B cell (primary cell): ENCODE measurements at regions of chr5 and their contacts with region 1.

Region 1: GRCh38 chr5:132456296-132457001 is 34.1 kb downstream of the IRF1 start:
- DNase-seq: peak; percentile 84
- ATAC-seq: peak; percentile 78
- H3K4me3 ChIP-seq: peak overlapping the region; percentile 12 to 53 (median 30)
- H3K4me3 Mint-ChIP-seq: peak overlapping the region; percentile 74
- H3K27ac ChIP-seq: peak overlapping the region; percentile 88 to 93
- H3K27ac Mint-ChIP-seq: peak overlapping the region; percentile 99
- H3K4me1 ChIP-seq: peaks cover 79 to 84% of the 10 kb centered on the region in 2 donors
- H3K4me1 Mint-ChIP-seq: peaks cover 92% of the 10 kb centered on the region
- H3K27me3 ChIP-seq: no peaks in the 10 kb centered on the region
- H3K27me3 Mint-ChIP-seq: no peaks in the 10 kb centered on the region
- CTCF ChIP-seq: no peak

Region 2: DNA sequence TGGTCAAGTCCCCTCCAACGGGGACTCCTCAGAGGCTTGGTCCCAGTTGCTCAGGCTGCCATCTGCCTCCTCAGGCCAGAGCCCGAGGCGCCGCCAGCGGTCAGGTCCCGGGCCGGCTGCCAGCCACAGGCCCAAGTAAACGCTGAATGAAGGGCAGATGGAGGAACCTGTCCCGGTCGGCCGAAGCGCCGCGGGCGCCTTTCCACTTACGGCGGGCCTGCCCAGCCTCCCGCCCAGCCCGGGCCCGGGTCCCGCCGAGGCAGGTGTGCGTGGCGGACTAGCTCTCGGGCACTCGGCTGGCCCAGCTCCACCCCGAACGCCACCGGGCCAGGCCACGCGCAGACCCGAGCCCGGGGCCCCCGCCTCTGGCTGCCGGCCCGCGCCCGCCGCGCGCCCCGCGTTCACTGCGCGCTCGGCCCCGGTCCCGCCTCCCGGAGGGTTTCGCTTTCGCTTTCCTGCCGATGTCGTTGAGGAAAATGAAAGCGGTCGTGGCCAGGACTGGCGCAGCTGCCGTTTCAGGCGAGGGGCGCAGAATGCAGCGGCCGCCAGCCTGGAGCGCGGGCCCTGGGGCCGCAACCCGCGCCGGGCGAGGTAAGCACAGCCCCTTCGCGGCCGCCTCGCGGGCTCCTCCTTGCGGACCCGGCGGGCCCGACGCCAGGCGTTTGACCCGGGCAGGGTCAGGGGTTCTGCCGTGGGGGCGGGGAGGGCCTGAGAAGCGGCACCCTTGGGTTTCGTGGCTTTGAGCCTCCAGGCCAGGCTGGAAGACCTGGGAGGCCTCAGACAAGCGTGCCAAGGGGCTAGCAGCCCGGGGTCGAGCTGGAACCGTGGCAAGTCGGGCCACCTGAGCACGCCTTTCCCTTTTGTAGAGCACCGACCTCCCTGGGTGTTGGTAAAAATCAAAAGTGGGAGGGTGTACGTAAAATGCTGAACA is 45.7 kb before region 1 on chr5:
- CTCF ChIA-PET with region 1: interaction called, 26 read pairs
- POLR2A ChIA-PET with region 1: interaction called, 14 read pairs
- intact Hi-C with region 1: no loop called
- DNase-seq: peak; percentile 94
- ATAC-seq: peak; percentile 81
- H3K4me3 ChIP-seq: peak overlapping the region; percentile 71 to 93 (median 78)
- H3K4me3 Mint-ChIP-seq: peak overlapping the region; percentile 98
- H3K27ac ChIP-seq: peak overlapping the region; percentile 96 to 97
- H3K27ac Mint-ChIP-seq: peak overlapping the region; percentile 99
- H3K4me1 ChIP-seq: peaks cover 61 to 63% of the 10 kb centered on the region in 2 donors
- H3K4me1 Mint-ChIP-seq: peaks cover 68% of the 10 kb centered on the region
- H3K27me3 ChIP-seq: no peaks in the 10 kb centered on the region
- H3K27me3 Mint-ChIP-seq: no peaks in the 10 kb centered on the region
- CTCF ChIP-seq: peak; percentile 77

Region 3: DNA sequence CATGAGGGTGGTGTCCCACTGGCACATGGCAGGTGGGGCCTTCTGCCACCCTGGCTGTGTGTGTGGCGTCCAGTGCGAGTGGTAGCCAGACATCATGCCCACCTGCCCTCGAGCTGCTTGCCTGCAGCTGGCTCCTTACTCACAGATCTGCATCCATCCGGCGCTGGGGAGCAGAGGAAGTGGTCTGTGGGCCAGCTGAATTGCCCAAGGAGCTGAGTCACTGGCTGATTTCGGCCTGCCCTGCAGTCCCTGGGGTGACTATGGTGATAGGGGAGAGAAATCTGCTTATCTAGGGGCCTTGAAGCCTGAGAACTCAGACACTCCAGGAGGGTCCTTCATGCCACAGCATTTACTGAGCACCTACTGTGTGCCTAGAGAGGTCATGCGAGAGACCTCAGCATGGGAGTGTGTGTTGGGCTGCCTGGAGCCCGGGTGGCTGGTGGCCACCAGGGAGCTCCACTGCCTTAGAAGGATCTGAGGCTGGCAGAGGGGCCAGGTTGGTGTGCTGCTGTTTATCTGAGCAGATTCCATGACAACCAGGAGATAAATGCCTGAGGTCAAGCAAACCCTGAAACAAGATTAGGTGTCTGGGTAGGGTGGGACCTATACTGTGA is 29.8 kb before region 1 on chr5:
- CTCF ChIA-PET with region 1: interaction called, 127 read pairs
- POLR2A ChIA-PET with region 1: interaction called, 77 read pairs
- intact Hi-C with region 1: loop called (anchors 1 kb)
- DNase-seq: peak; percentile 64
- ATAC-seq: peak; percentile 41
- H3K4me3 ChIP-seq: peak overlapping the region in 2 of 5 experiments; percentile 8 to 56
- H3K4me3 Mint-ChIP-seq: peak overlapping the region; percentile 80
- H3K27ac ChIP-seq: peak overlapping the region; percentile 90 to 94
- H3K27ac Mint-ChIP-seq: peak overlapping the region; percentile 93
- H3K4me1 ChIP-seq: peaks cover 99 to 100% of the 10 kb centered on the region in 2 donors
- H3K4me1 Mint-ChIP-seq: peaks cover 97% of the 10 kb centered on the region
- H3K27me3 ChIP-seq: no peaks in the 10 kb centered on the region
- H3K27me3 Mint-ChIP-seq: no peaks in the 10 kb centered on the region
- CTCF ChIP-seq: no peak

Region 4: DNA sequence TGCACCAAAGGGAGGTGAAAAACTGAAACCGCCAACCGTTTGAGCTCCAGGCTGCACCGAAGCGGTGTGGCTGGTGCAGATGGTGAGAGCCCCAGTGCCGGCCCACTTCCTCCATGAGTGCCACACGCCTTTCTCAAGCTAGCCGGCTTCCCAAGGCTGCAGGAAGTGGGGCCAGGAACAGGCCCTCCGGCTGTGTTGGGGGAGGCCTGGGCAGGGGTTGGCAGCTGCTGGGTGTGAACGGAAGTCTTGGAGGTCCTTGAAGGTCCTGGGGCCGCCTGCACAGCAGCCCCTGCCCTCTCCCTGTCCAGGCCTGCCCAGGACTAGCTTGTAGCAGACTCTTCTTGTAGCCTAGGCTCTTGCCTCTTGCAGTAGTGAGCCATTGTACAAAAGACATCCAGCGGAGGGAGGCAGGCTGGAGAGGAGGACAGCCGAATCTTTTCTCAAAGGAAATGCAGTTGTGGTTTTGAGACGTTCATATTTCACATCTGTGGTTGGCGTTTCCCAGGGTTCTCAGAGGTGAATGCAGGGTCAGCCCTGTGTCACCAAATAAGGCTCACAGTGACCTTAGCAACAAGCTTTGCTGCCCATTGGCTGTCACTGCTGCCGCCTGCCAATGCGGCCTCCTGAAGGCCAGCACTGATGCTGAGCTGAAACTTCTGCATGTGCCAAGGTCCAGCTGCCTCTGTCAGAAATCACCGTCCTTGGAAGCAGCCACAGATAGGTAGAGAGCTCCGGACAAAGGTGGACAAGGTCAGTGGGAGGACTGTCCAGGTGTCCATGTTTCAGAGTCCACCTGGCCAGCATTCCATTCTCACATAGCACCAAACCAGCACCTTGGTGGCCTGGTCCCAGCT is 10.2 kb after region 1 on chr5:
- CTCF ChIA-PET with region 1: interaction called, 128 read pairs
- POLR2A ChIA-PET with region 1: interaction called, 49 read pairs
- intact Hi-C with region 1: loop called (anchors 1 kb)
- DNase-seq: peak; percentile 72
- ATAC-seq: peak; percentile 61
- H3K4me3 ChIP-seq: peak overlapping the region; percentile 10 to 53 (median 35)
- H3K4me3 Mint-ChIP-seq: peak overlapping the region; percentile 62
- H3K27ac ChIP-seq: peak overlapping the region; percentile 70 to 72
- H3K27ac Mint-ChIP-seq: peak overlapping the region; percentile 77
- H3K4me1 ChIP-seq: peaks cover 71 to 83% of the 10 kb centered on the region in 2 donors
- H3K4me1 Mint-ChIP-seq: peaks cover 85% of the 10 kb centered on the region
- H3K27me3 ChIP-seq: no peaks in the 10 kb centered on the region
- H3K27me3 Mint-ChIP-seq: no peaks in the 10 kb centered on the region
- CTCF ChIP-seq: no peak

Region 5: GRCh38 chr5:132479111-132479951 is 22.9 kb after region 1 on chr5:
- CTCF ChIA-PET with region 1: interaction called, 128 read pairs
- POLR2A ChIA-PET with region 1: interaction called, 14 read pairs
- intact Hi-C with region 1: no loop called
- DNase-seq: peak; percentile 37
- ATAC-seq: no peak
- H3K4me3 ChIP-seq: no peak overlapping the region
- H3K4me3 Mint-ChIP-seq: peak overlapping the region; percentile 58
- H3K27ac ChIP-seq: peak overlapping the region; percentile 6 to 56
- H3K27ac Mint-ChIP-seq: peak overlapping the region; percentile 99
- H3K4me1 ChIP-seq: peaks cover 30 to 64% of the 10 kb centered on the region in 2 donors
- H3K4me1 Mint-ChIP-seq: peaks cover 77% of the 10 kb centered on the region
- H3K27me3 ChIP-seq: no peaks in the 10 kb centered on the region
- H3K27me3 Mint-ChIP-seq: no peaks in the 10 kb centered on the region
- CTCF ChIP-seq: no peak

Region 6: DNA sequence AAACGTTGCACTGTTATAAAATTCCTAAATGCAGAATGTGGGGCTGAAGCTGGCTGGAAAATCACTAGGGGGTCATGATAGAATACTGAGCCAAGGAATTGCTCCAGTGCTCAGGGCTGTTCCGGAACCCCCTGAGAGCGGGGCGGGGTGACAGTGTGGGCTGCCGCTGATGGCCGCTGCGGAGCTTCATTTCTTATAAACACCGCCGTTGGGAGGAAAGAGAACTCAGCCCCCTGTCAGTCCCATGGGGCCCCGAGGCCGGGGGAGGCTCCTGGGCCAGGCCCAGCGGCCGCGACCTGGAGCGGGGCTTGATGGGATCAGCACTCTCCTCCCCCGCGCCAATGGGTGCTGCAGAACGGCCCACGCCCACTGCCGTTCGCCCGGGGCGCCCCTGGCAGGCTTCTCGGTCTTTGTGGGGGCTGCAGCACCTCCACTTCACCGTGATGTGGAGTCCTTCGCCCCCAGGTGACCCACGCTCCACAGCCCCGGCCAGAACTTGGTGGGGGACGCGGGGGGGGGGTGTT is 39.3 kb after region 1 on chr5:
- CTCF ChIA-PET with region 1: interaction called, 82 read pairs
- POLR2A ChIA-PET with region 1: interaction called, 65 read pairs
- intact Hi-C with region 1: loop called (anchors 1 kb)
- DNase-seq: peak; percentile 91
- ATAC-seq: peak; percentile 58
- H3K4me3 ChIP-seq: peak overlapping the region; percentile 42 to 91 (median 84)
- H3K4me3 Mint-ChIP-seq: peak overlapping the region; percentile 97
- H3K27ac ChIP-seq: peak overlapping the region; percentile 85 to 95
- H3K27ac Mint-ChIP-seq: peak overlapping the region; percentile 97
- H3K4me1 ChIP-seq: peaks cover 48 to 59% of the 10 kb centered on the region in 2 donors
- H3K4me1 Mint-ChIP-seq: peaks cover 68% of the 10 kb centered on the region
- H3K27me3 ChIP-seq: no peaks in the 10 kb centered on the region
- H3K27me3 Mint-ChIP-seq: no peaks in the 10 kb centered on the region
- CTCF ChIP-seq: no peak